Breast epithelium (tissue), 4 donors: ENCODE measurements at regions of chr7 and their contacts with region 1.

Region 1: DNA sequence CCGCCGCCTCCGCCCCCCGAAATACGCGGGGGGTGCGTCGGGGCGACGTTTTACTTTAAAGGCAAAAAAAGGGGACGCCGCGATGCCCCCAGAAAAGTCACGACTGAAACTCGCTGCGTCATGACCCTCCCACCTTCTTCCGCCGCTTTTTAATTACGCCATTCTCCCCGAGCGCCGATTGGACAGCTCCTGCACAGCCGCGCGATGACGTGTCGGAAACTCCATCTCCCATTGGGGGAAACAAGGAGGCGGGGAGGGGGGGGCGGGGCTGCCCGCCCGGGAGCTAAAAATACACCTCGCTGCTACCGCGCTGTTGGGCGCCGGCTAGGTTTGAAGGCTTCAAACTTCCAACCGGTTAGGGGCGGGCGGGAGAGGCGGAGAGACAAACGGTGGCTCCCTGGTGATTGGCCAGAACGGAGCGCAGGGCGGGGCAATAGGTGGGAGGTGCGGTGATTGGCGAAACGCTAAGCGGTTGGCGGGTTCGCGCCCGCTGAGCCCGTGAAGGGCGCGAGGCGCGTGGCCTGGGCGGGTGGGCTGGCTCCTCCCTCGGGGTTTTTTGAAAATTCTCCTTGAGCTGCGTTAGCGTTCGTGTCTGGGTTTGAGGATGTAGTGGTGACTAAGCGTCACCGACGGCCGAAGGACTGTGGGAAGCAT is at the start of gene RHEB:
- DNase-seq: peak; percentile 98 to 99
- H3K4me3 ChIP-seq: peak within 1 kb of the TSS; percentile 79 to 99 (median 86)
- H3K27ac ChIP-seq: peak within 1 kb of the TSS; percentile 99 to 100
- H3K4me1 ChIP-seq: peaks cover 0 to 9% of the 10 kb centered on the region in 2 donors
- H3K27me3 ChIP-seq: no peaks in the 10 kb centered on the region
- CTCF ChIP-seq: no peak
- POLR2A ChIP-seq: no peak
- total RNA-seq, gene RHEB: 89.3 to 99.3 (median 95.0) TPM

Region 2: GRCh38 chr7:150734254-150734653 is 785.6 kb before region 1 on chr7:
- intact Hi-C with region 1: no loop called
- DNase-seq: no peak
- H3K4me3 ChIP-seq: no peak overlapping the region
- H3K27ac ChIP-seq: no peak overlapping the region
- H3K4me1 ChIP-seq: no peaks in the 10 kb centered on the region
- H3K27me3 ChIP-seq: no peaks in the 10 kb centered on the region
- CTCF ChIP-seq: no peak
- POLR2A ChIP-seq: no peak

Region 3: DNA sequence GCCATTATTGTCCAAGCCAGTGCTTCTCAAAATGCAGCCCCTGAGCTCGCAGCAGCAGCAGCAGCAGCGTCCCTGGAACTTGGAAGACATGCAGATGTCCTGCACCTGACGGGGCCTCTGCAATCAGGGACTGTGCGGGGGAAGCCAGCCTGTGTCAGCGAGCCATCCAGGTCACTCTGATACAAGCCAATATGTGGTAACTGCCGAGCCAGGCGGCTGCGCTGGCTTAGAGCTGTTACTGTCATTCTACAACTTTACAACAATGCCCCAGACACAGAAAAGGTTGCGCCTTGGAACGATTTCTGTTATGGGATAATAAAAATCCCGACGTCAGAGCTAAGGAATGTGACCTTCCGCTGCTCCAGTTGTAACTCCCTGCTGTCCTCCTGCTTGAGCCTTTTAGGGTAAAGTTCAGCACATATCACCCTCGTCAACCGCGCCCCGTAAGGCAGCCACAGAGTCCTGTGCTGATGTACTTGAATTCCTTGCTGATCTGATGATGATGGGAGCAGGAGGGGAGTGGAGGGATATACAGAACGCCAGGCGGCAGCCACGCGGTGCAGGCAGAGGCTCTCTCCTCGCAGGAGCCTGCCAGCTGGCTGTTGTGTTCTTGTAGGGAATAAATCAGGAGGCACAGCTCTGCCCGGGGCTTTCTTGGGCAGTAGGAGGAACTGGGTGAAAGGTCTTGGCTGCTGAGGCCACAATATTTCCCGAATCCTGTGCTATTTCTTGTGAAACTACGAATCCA is 60.0 kb before region 1 on chr7:
- intact Hi-C with region 1: loop called (anchors 10 kb)
- DNase-seq: peak; percentile 81 to 96
- H3K4me3 ChIP-seq: peak overlapping the region in 2 of 3 donors; percentile 30 to 40
- H3K27ac ChIP-seq: peak overlapping the region; percentile 95
- H3K4me1 ChIP-seq: peaks cover 0 to 9% of the 10 kb centered on the region in 2 donors
- H3K27me3 ChIP-seq: no peaks in the 10 kb centered on the region
- CTCF ChIP-seq: peak in 2 of 3 donors; percentile 23 to 29
- POLR2A ChIP-seq: no peak

Region 4: GRCh38 chr7:151477867-151478266 is 42.0 kb before region 1 on chr7:
- intact Hi-C with region 1: no loop called
- DNase-seq: no peak
- H3K4me3 ChIP-seq: no peak overlapping the region
- H3K27ac ChIP-seq: no peak overlapping the region
- H3K4me1 ChIP-seq: no peaks in the 10 kb centered on the region
- H3K27me3 ChIP-seq: no peaks in the 10 kb centered on the region
- CTCF ChIP-seq: no peak
- POLR2A ChIP-seq: no peak